Posterior vena cava (tissue), 2 donors: ENCODE measurements at regions of chr20 and their contacts with region 1.

Region 1: GRCh38 chr20:22744341-22745193 is 160.2 kb upstream of the FOXA2 start:
- DNase-seq: no peak

Region 2: DNA sequence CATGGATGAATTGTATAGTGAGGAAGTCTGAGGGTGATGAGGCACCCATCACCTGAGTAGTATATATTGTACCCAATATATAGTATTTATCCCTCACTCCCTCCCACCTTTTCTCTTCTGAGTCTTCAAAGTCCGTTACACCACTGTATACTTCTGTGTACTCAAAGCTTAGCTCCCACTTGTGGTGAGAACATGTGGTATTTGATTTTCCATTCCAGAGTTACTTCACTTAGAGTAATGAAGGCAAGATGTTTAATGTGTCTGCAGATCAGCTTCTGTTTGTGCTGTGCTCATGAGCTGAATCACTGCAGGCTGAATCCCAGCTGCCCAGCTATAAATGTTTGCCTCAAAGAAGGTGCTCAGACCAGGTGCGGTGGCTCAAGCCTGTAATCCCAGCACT is 20.9 kb before region 1 on chr20:
- intact Hi-C with region 1: loop called in 1 of 2 experiments (anchors 1 kb)
- DNase-seq: no peak

Region 3: DNA sequence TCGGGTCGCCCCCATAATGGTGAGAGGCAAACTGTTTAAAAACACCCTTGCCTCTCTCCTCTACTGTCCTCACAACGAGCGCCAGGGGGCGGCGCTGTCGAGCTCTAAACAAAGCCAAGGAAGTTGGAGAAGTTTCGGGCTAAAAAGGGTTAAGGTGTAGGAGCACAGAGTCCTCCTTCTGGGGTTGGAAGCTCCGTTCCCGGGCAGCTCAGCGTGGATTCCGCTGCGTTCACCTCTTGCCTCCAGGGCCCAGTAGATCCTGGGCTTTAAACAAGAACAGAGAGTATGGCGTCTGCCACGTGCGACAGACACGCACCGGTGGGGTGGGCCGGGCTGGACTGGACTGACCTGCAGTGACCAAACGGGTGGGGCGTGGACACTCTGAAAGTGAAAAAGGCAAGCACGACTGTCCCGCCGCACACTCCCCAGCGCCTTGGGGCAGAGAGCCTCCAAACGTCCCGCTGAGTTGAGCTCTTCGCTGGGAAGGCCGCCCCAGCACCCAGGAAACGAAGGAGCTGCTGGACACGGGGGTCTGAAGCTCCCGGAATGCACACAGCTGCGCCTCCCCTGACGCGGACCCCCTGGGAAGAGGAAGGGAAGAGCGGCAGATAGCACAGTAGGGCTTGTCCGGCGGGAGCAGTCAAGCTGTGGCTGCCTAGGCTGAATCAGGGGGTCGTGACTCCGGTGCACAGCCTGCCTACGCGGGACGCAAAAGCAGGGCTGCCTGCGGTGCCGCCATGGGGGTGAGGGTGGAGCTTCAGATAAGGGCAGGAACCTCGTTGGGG is 306.5 kb after region 1 on chr20:
- intact Hi-C with region 1: no loop called
- DNase-seq: peak; percentile 95